ENCODE measurements at regions of chr14 and their contacts with region 1.

Region 1: DNA sequence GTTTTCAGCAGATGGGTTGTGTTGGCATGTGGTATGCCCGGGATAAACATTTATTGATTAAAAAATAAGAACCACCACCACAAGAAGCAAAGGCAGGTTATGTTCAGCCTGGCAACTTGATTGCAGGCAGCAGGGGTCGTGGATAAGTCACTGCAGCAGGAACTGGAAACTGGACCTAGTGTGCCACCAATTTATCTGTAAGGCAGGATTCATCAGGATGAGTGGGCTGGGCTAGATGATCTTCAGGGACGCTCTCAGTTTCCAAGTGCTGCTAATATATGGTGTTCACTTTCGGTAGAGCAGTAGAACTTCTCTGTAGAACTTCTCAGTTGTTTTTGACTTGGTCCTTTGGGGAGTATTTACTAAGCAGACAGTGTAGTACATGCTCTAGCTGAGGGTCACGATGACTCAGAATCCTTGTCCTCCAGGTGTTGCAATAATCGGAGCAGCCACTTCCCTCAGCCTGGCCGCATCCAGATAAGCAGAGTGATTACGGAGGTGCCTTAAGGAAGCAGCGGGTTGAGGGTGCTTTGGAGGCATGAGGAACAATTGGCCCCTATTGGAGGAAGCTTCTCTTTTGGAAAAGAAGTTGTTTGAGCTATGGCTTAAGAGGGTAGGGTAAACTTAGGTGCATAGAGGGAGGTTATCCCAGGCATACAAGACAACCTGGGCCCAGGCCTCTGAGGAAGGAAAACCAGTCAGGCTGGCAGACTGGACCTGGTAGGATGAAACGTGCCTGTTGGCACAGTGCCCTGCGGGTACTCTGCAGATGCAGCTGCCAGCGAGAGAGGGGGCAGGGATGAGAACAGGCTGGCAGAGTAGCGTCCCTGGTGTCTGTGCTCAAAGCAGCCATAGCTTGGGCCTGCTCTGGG is 104.0 kb downstream of the GPR135 start:
- DNase-seq: no peak
- H3K4me3 ChIP-seq: no peak overlapping the region
- H3K27ac ChIP-seq: peak overlapping the region; percentile 10
- H3K4me1 ChIP-seq: peaks cover 66% of the 10 kb centered on the region
- H3K27me3 ChIP-seq: no peaks in the 10 kb centered on the region
- CTCF ChIP-seq: no peak
- POLR2A ChIP-seq: no peak

Region 2: DNA sequence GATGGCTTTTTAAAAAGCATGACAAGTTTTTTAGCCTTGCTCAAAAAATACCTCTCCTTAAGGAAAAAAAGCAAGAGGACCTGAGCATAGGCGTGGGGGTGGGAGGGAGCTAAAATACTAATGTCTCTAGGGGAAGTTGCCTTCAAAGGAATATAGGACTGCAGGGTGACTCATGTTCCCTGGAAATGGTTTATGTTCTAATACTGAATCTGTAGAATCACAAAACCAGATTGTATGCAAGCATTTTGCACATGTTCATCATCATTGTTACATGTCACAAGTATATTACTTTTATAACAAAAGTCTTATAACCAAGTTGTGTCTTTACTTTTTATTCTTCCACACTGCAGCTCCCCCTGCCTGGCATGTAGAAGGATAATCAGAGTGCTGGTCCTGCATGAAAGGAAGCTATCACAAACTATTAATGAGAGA is 67.4 kb after region 1 on chr14:
- intact Hi-C with region 1: loop called (anchors 10 kb)
- DNase-seq: no peak
- H3K4me3 ChIP-seq: no peak overlapping the region
- H3K27ac ChIP-seq: peak overlapping the region; percentile 69
- H3K4me1 ChIP-seq: peaks cover 28% of the 10 kb centered on the region
- H3K27me3 ChIP-seq: no peaks in the 10 kb centered on the region
- CTCF ChIP-seq: peak in 1 of 3 experiments; percentile 15
- POLR2A ChIP-seq: no peak

Measured in vagina (tissue), 2 donors.